Activated CD4-positive, alpha-beta T cell treated with anti-CD3 and anti-CD28 coated beads, Interleukin-2, amount 10 ng/mL, durations not matched to agents 24 days and 14 days (primary cell): ENCODE measurements at regions of chr9 and their contacts with region 1.

Region 1: GRCh38 chr9:115099901-115100300 is 18.1 kb downstream of the TNC start:
- DNase-seq: no peak
- H3K4me3 Mint-ChIP-seq: no peak overlapping the region
- H3K27ac Mint-ChIP-seq: no peak overlapping the region
- H3K4me1 Mint-ChIP-seq: no peaks in the 10 kb centered on the region
- H3K27me3 Mint-ChIP-seq: peaks cover 20% of the 10 kb centered on the region

Region 2: GRCh38 chr9:115157245-115157674 is 57.4 kb after region 1 on chr9:
- intact Hi-C with region 1: loop called (anchors 10 kb)
- DNase-seq: no peak
- H3K4me3 Mint-ChIP-seq: no peak overlapping the region
- H3K27ac Mint-ChIP-seq: no peak overlapping the region
- H3K4me1 Mint-ChIP-seq: peaks cover 7% of the 10 kb centered on the region
- H3K27me3 Mint-ChIP-seq: peaks cover 13% of the 10 kb centered on the region